ENCODE measurements at regions of chr1 and their contacts with region 1.

Region 1: DNA sequence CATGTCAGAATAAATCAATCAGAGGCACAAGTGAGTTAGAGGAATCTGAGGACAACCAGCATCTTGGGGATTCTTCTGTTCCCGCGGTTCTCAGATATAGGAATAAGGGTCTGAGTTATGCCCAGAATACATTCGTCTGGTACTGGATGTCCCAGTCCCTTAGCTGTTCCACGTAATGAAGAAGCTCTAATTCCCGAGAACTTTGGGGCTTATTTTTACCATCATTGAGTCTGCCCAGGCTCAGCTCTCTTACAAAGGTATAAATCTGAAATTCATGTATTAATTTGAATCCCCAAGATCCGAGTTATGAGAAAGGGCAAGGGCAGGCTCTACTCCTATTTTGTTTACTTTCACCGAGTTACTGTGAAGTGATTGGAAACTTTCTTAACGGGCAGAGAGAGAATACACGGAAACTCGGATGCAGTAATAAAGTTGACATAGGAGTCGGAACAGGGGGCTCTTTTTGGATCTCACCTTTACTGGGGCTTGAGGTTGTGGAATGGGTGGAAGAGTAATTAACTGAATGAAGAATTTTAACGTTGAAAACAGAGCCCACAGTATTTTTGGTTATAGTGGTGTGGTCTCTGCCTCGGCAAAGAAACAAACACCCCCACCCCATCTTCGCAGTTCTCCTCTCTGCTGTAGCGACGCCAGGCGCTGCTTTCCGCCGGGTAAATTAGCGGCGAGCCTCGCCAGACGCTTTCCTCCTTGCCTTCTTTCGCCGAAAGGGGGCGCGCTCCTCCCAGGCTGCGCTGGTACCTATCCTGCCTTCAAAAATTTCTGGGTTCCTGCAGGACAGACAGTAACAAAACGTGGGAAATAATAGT is 7.1 kb downstream of the PRRX1 start:
- DNase-seq: no peak
- H3K4me3 ChIP-seq: peak overlapping the region; percentile 36
- H3K27ac ChIP-seq: no peak overlapping the region
- H3K27me3 ChIP-seq: no peaks in the 10 kb centered on the region
- CTCF ChIP-seq: peak; percentile 74

Region 2: GRCh38 chr1:170634293-170634692 is 36.7 kb before region 1 on chr1:
- CTCF ChIA-PET with region 1: no interaction called
- POLR2A ChIA-PET with region 1: no interaction called
- DNase-seq: peak; percentile 61
- H3K4me3 ChIP-seq: no peak overlapping the region
- H3K27ac ChIP-seq: no peak overlapping the region
- H3K27me3 ChIP-seq: no peaks in the 10 kb centered on the region
- CTCF ChIP-seq: no peak

Region 3: DNA sequence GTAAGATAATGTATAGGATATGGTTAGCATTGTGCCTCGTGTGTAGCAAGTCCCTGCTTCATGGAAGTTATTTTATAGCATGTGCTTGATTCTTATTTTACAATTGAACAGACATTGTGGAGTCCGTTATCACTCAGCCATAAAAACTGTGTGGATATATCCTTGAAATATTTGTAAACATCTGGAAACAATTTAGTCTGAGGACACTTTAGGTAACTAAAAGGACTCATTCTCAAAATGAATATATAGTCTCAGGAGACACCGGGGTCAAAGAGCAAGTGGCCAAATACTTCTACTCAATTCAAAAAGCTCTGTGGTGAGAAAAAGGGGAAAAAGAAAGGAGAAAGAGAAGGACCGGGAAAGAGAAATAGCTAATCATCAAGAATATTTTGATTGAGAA is 16.6 kb after region 1 on chr1:
- CTCF ChIA-PET with region 1: interaction called, 24 read pairs
- POLR2A ChIA-PET with region 1: no interaction called
- DNase-seq: no peak
- H3K4me3 ChIP-seq: no peak overlapping the region
- H3K27ac ChIP-seq: no peak overlapping the region
- H3K27me3 ChIP-seq: no peaks in the 10 kb centered on the region
- CTCF ChIP-seq: no peak

Measured in AG04450 (cell line).